ENCODE measurements at regions of chr6 and their contacts with region 1.

Region 1: DNA sequence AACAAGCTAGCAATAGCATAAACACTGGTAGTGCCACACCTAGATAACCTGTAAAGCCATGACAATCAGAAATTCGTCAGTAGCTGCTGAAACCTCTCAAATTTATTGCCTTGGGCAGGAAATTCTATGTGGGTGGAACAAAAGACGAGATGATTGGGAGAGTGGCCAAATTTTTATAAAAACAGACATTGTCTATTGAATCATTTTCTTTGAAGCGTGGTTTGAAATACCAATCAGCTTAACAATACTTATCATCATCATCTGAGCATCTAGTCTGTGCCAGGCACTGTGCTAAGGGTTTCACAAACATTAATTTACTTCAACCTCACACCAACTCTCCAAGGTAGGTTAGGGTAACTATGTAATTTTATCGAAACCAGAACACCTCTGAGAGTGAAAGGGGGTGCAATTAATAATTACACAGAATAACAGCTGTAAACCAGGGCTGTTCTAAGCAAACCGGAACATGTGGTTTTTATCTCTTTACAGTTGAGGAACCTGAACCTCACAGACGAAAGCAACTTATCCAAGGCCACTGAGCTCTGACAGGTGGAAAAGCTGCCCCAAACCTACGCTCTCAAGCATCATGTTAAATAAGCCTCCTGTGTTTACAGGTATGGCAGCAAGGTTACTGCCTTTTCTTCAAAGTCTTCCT is 43.4 kb downstream of the NHSL1 start:
- DNase-seq: peak; percentile 48
- H3K4me3 Mint-ChIP-seq: peak overlapping the region; percentile 54
- H3K27ac Mint-ChIP-seq: peak overlapping the region; percentile 97
- H3K4me1 Mint-ChIP-seq: peaks cover 33% of the 10 kb centered on the region
- H3K27me3 Mint-ChIP-seq: no peaks in the 10 kb centered on the region

Region 2: DNA sequence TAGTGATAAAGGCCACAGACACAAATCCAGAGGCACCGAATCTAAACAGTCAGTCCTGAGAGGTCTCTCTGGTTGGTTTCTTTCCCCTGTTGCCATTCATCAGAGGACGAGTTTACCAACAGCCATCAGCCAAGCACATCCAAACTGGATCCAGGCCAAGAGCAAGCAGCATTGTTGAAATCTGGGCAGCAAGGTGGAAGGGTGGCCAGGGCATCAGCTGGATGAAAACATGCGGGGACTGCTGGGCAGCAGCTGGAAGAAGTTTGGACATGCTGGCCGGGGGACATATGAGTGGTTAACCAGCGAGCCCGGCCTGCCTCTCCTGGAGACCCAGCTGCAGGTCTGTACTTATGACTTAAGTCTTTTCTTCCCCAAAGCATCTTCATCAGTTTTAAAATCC is 78.0 kb before region 1 on chr6 and contains the start of gene SMIM28:
- CTCF ChIA-PET with region 1: no interaction called
- DNase-seq: no peak
- H3K4me3 Mint-ChIP-seq: no peak within 1 kb of the TSS
- H3K27ac Mint-ChIP-seq: no peak within 1 kb of the TSS
- H3K4me1 Mint-ChIP-seq: no peaks in the 10 kb centered on the region
- H3K27me3 Mint-ChIP-seq: peaks cover 8% of the 10 kb centered on the region

Region 3: DNA sequence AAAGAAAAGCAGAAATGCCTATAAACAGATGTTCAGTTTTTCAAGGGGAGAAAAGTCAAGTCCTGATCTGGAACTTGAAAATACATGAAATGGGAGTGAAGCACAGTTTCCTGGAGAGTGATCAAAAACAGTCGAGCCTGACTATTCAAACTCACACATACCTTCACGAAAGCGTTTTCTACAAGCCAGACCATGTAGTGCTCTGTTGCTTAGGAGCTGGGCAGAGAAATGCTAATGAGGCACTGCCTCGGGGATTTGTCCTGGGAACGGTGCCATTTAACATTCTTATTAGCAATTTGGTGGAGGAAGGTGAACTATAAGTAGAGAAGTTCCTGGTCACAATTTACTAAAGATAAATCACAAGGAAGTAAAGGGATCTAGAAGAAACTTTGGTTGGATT is 37.5 kb after region 1 on chr6:
- CTCF ChIA-PET with region 1: no interaction called
- DNase-seq: no peak
- H3K4me3 Mint-ChIP-seq: no peak overlapping the region
- H3K27ac Mint-ChIP-seq: no peak overlapping the region
- H3K4me1 Mint-ChIP-seq: no peaks in the 10 kb centered on the region
- H3K27me3 Mint-ChIP-seq: peaks cover 13% of the 10 kb centered on the region

Region 4: DNA sequence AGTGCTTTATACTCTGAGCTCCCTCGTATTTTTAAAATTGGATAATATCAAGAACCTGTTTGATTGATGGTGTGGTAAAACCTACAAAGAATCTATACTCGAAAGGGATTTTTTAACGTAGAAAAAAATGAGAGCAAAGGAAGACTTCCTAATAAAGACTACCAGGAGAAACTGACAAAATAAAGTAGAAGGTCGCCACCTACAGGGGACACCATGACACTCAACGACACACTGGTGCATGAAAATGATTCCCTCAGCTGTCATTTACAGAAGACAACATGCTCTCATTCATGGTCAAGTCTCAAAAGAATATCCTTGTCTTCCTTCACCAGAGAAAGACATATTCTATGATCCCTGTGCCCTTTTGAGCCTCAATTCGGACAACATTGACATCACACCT is 53.5 kb after region 1 on chr6:
- CTCF ChIA-PET with region 1: interaction called, 17 read pairs
- DNase-seq: peak; percentile 70
- H3K4me3 Mint-ChIP-seq: no peak overlapping the region
- H3K27ac Mint-ChIP-seq: no peak overlapping the region
- H3K4me1 Mint-ChIP-seq: peaks cover 6% of the 10 kb centered on the region
- H3K27me3 Mint-ChIP-seq: peaks cover 4% of the 10 kb centered on the region

Measured in activated naive CD4-positive, alpha-beta T cell treated with anti-CD3 and anti-CD28 coated beads, Interleukin-2, amount 10 ng/mL, durations not matched to agents 7 days and 5 days (primary cell).